Thyroid gland (tissue), 4 donors: ENCODE measurements at regions of chr5 and their contacts with region 1.

Region 1: GRCh38 chr5:138077065-138077696 is 6.7 kb upstream of the WNT8A start:
- DNase-seq: peak; percentile 67 to 74
- H3K4me3 ChIP-seq: no peak overlapping the region
- H3K27ac ChIP-seq: no peak overlapping the region
- H3K4me1 ChIP-seq: no peaks in the 10 kb centered on the region
- H3K27me3 ChIP-seq: no peaks in the 10 kb centered on the region
- CTCF ChIP-seq: peak; percentile 43 to 87 (median 81)
- POLR2A ChIP-seq: no peak

Region 2: DNA sequence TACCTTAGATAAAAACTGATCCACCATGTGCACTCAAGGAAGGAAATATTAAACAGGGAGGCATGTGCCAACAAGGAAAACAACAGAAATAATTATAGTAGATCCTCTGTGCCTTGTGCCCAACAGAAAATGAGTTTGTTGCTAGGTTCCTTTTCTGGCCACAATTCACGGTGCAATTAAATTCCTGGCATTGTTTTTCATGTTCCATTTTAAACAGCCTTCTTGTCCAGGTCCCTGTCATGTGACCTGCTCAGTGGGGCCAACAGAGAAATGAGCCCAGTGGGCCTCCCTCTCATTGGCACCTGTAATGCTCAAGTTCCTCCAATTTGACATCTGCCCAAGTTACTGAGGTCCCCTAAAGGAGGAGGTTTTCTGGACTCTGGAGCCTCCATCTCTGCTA is 634.5 kb before region 1 on chr5:
- intact Hi-C with region 1: no loop called
- DNase-seq: no peak
- H3K4me3 ChIP-seq: no peak overlapping the region
- H3K27ac ChIP-seq: no peak overlapping the region
- H3K4me1 ChIP-seq: no peaks in the 10 kb centered on the region
- H3K27me3 ChIP-seq: no peaks in the 10 kb centered on the region
- CTCF ChIP-seq: no peak
- POLR2A ChIP-seq: no peak

Region 3: GRCh38 chr5:137923856-137924255 is 153.3 kb before region 1 on chr5:
- intact Hi-C with region 1: no loop called
- DNase-seq: no peak
- H3K4me3 ChIP-seq: no peak overlapping the region
- H3K27ac ChIP-seq: no peak overlapping the region
- H3K4me1 ChIP-seq: no peaks in the 10 kb centered on the region
- H3K27me3 ChIP-seq: no peaks in the 10 kb centered on the region
- CTCF ChIP-seq: no peak
- POLR2A ChIP-seq: no peak

Region 4: DNA sequence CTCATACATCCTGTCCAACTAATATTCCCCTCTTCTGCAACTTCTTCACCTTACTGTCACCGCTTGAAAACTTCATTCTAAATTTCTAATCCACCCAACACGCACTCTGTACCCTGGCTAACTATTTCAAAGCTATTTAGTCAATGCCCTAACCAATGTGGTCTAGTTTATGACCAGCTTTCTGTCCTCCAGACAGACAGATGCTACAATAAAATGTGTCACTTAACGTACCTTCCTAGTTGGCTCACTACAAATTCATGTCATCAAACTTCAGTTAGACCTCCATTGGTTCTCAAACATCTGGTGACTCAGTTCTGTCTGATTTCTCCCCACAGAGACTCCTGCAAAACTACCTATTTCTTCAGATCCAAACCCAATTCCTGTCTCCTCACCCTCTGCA is 102.0 kb before region 1 on chr5:
- intact Hi-C with region 1: no loop called
- DNase-seq: no peak
- H3K4me3 ChIP-seq: no peak overlapping the region
- H3K27ac ChIP-seq: no peak overlapping the region
- H3K4me1 ChIP-seq: no peaks in the 10 kb centered on the region
- H3K27me3 ChIP-seq: no peaks in the 10 kb centered on the region
- CTCF ChIP-seq: no peak
- POLR2A ChIP-seq: no peak

Region 5: GRCh38 chr5:138132543-138132942 is 55.4 kb after region 1 on chr5:
- intact Hi-C with region 1: loop called (anchors 5 kb)
- DNase-seq: no peak
- H3K4me3 ChIP-seq: no peak overlapping the region
- H3K27ac ChIP-seq: no peak overlapping the region
- H3K4me1 ChIP-seq: no peaks in the 10 kb centered on the region
- H3K27me3 ChIP-seq: no peaks in the 10 kb centered on the region
- CTCF ChIP-seq: no peak
- POLR2A ChIP-seq: no peak

Region 6: GRCh38 chr5:138575194-138576015 is 498.2 kb after region 1 on chr5 and contains the start of gene HSPA9:
- intact Hi-C with region 1: no loop called
- DNase-seq: peak; percentile 99
- H3K4me3 ChIP-seq: peak within 1 kb of the TSS; percentile 94 to 98 (median 97)
- H3K27ac ChIP-seq: peak within 1 kb of the TSS; percentile 92 to 100 (median 100)
- H3K4me1 ChIP-seq: peaks cover 10 to 16% of the 10 kb centered on the region in 2 donors
- H3K27me3 ChIP-seq: no peaks in the 10 kb centered on the region
- CTCF ChIP-seq: peak in 2 of 6 experiments; percentile 9 to 41
- POLR2A ChIP-seq: peak; percentile 55 to 75
- total RNA-seq, gene HSPA9: 253 to 556 (median 406) TPM